Body of pancreas (tissue), 4 donors: ENCODE measurements at regions of chr5 and their contacts with region 1.

Region 1: DNA sequence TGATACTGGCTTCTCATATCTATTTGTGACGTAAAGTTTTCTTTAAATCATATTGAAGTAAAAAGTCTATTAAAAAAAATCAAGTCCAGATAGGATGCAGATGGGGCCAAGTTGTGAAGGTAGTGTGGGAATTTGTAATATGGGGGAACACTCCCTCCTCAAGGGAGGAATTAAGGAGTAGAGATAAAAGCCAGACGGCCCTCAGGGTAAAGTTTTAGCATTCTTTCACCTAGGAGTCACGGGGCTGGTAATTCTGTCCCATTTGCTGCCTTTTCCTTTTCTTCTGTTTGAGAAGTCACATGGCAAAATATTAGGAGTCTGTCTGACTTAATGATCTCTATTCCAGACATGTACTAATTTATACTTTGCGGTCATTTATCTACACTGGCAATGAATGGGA is 61.8 kb downstream of the SNX24 start:
- DNase-seq: no peak
- ATAC-seq: no peak
- H3K4me3 ChIP-seq: no peak overlapping the region
- H3K27ac ChIP-seq: no peak overlapping the region
- H3K4me1 ChIP-seq: no peaks in the 10 kb centered on the region
- H3K27me3 ChIP-seq: no peaks in the 10 kb centered on the region
- CTCF ChIP-seq: no peak
- POLR2A ChIP-seq: no peak

Region 2: GRCh38 chr5:122576256-122577016 is 330.8 kb before region 1 on chr5:
- intact Hi-C with region 1: no loop called
- DNase-seq: no peak
- ATAC-seq: no peak
- H3K4me3 ChIP-seq: no peak overlapping the region
- H3K27ac ChIP-seq: no peak overlapping the region
- H3K4me1 ChIP-seq: no peaks in the 10 kb centered on the region
- H3K27me3 ChIP-seq: no peaks in the 10 kb centered on the region
- CTCF ChIP-seq: no peak
- POLR2A ChIP-seq: no peak

Region 3: GRCh38 chr5:122999945-123000563 is 92.8 kb after region 1 on chr5:
- intact Hi-C with region 1: loop called (anchors 10 kb)
- DNase-seq: peak; percentile 73 to 85 (median 80)
- ATAC-seq: peak; percentile 72
- H3K4me3 ChIP-seq: no peak overlapping the region
- H3K27ac ChIP-seq: no peak overlapping the region
- H3K4me1 ChIP-seq: no peaks in the 10 kb centered on the region
- H3K27me3 ChIP-seq: no peaks in the 10 kb centered on the region
- CTCF ChIP-seq: peak; percentile 59 to 95 (median 88)
- POLR2A ChIP-seq: no peak

Region 4: GRCh38 chr5:123116058-123116457 is 208.8 kb after region 1 on chr5:
- intact Hi-C with region 1: no loop called
- DNase-seq: no peak
- ATAC-seq: no peak
- H3K4me3 ChIP-seq: no peak overlapping the region
- H3K27ac ChIP-seq: no peak overlapping the region
- H3K4me1 ChIP-seq: no peaks in the 10 kb centered on the region
- H3K27me3 ChIP-seq: no peaks in the 10 kb centered on the region
- CTCF ChIP-seq: no peak
- POLR2A ChIP-seq: no peak

Region 5: DNA sequence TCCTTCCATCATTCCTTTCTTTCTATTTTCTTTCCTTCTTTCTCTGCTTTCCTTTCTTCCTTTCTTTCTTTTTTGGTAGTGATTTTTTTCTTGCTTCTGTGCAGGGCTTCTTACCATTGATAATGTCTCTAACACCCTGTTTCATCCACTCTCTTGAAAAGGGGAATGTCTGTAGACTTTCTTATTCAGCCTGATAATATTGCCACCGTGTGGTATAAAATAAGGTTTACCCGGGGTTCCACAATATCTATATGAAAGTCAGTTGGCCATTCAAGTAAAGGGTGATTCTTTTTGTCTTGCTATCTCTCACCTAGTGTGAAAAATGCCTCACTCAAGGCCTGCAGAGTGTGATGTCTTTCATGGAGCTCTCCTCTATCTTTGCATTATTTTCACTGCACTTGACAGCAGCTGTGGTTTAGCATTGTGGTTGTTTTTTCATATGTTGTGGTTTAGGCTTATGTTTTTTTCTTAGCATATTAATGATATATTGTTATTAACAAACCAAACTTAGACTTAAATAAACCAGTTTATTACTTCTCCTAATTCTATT is 758.7 kb after region 1 on chr5:
- intact Hi-C with region 1: no loop called
- DNase-seq: no peak
- ATAC-seq: no peak
- H3K4me3 ChIP-seq: no peak overlapping the region
- H3K27ac ChIP-seq: no peak overlapping the region
- H3K4me1 ChIP-seq: no peaks in the 10 kb centered on the region
- H3K27me3 ChIP-seq: no peaks in the 10 kb centered on the region
- CTCF ChIP-seq: no peak
- POLR2A ChIP-seq: no peak